HepG2 (cell line): ENCODE measurements at regions of chr16 and their contacts with region 1.

Region 1: DNA sequence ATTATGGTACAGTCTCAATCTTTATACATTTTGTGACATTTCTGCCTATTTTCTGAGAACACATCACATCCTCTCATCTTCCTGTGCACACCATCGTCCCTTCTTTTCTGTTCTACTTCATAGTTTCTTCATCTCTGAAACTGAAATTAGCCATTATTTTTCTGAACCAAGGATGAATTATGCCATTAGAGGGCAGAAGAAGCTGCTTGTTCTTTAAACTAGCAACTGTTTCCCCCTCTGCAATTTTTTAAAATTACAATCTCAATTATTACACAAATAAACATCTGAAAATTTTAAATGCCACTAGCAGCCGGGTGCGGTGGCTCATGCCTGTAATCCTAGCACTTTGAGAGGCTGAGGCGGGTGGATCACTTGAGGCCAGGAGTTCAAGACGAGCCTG is 41.3 kb downstream of the RBBP6 start:
- DNase-seq: no peak
- ATAC-seq: no peak
- H3K4me3 ChIP-seq: no peak overlapping the region
- H3K27ac ChIP-seq: no peak overlapping the region
- H3K4me1 ChIP-seq: 0 out of 2 replicates have a peak, but pooled peaks cover 9% of the 10 kb centered on the region
- H3K27me3 ChIP-seq: 0 out of 5 replicates have a peak, but pooled peaks cover 0 to 4% of the 10 kb centered on the region in 2 experiments
- CTCF ChIP-seq: peak; percentile 35
- EP300 ChIP-seq: no peak
- POLR2A ChIP-seq: no peak
- RAD21 ChIP-seq: no peak

Region 2: DNA sequence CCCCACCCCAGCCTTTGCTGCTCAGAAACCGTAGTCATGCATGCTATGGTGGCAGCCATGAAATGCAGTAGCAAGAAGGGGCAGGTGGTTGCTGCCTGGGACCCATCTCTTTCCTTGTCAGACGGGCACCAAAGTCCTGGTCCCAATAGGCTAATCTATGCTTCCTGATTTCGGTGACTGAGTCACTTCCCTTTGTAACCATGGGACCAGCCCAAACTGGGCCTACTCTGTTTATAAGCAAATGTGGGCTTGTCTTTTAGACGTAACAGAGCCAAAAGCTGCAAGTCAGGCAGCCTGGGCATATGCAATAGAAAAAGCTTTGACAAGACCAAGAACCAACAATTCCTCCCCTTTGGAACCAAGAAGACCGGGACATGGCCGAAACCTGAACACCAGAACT is 140.4 kb before region 1 on chr16:
- CTCF ChIA-PET with region 1: no interaction called
- POLR2A ChIA-PET with region 1: no interaction called
- in situ Hi-C with region 1: no loop called
- intact Hi-C with region 1: no loop called
- DNase-seq: no peak
- ATAC-seq: no peak
- H3K4me3 ChIP-seq: no peak overlapping the region
- H3K27ac ChIP-seq: no peak overlapping the region
- H3K4me1 ChIP-seq: no peaks in the 10 kb centered on the region
- H3K27me3 ChIP-seq: peaks cover 0 to 19% of the 10 kb centered on the region in 2 experiments; a peak in 3 of 5 replicates
- CTCF ChIP-seq: no peak
- EP300 ChIP-seq: no peak
- POLR2A ChIP-seq: no peak
- RAD21 ChIP-seq: no peak

Region 3: DNA sequence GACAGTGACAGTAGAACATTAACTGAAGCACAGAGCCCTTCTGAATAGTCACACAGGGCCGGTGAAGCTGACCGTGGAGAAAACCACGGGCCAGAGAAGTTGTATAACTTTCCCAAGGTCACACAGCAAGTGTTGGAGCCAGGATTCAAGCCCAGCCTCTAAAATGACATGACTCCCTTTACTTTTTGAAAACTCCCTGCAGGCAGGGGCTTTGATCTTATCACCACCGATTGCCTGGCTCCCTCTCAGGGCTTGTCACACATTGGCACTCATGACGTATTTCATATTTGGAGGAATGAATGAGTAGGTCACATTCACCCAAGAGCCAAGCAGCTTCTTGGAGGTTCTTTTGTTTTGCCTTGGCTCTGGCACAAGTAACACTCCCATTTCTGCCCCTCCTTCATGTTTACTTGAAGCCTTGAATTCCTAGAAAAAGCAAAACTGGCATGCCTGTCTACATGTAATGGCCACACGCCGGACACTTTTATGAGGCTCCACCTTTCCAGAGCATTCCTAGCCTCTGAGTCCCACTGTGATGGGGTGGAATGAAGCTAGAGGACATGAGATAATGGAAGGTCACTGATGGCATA is 54.6 kb before region 1 on chr16:
- CTCF ChIA-PET with region 1: no interaction called
- POLR2A ChIA-PET with region 1: no interaction called
- in situ Hi-C with region 1: no loop called
- intact Hi-C with region 1: no loop called
- DNase-seq: peak; percentile 58
- ATAC-seq: peak; percentile 56
- H3K4me3 ChIP-seq: 0 out of 6 replicates have a peak overlapping the region, but pooled peaks of 1 of the 3 experiments have one; percentile 10
- H3K27ac ChIP-seq: no peak overlapping the region
- H3K4me1 ChIP-seq: peaks cover 33% of the 10 kb centered on the region
- H3K27me3 ChIP-seq: peaks cover 0 to 8% of the 10 kb centered on the region in 2 experiments; a peak in 2 of 5 replicates
- CTCF ChIP-seq: no peak
- EP300 ChIP-seq: no peak
- POLR2A ChIP-seq: no peak
- RAD21 ChIP-seq: no peak

Region 4: GRCh38 chr16:24689145-24689544 is 108.5 kb after region 1 on chr16:
- CTCF ChIA-PET with region 1: no interaction called
- POLR2A ChIA-PET with region 1: no interaction called
- in situ Hi-C with region 1: no loop called
- intact Hi-C with region 1: loop called (anchors 1 kb)
- DNase-seq: peak; percentile 53
- ATAC-seq: peak; percentile 78
- H3K4me3 ChIP-seq: no peak overlapping the region
- H3K27ac ChIP-seq: no peak overlapping the region
- H3K4me1 ChIP-seq: peaks cover 34% of the 10 kb centered on the region
- H3K27me3 ChIP-seq: peaks cover 0 to 2% of the 10 kb centered on the region in 2 experiments; a peak in 1 of 5 replicates
- CTCF ChIP-seq: peak; percentile 81
- EP300 ChIP-seq: no peak
- POLR2A ChIP-seq: no peak
- RAD21 ChIP-seq: peak; percentile 56; the same call in 1 of the 2 replicates